Prostate gland (tissue), 2 donors: ENCODE measurements at regions of chr11 and their contacts with region 1.

Region 1: DNA sequence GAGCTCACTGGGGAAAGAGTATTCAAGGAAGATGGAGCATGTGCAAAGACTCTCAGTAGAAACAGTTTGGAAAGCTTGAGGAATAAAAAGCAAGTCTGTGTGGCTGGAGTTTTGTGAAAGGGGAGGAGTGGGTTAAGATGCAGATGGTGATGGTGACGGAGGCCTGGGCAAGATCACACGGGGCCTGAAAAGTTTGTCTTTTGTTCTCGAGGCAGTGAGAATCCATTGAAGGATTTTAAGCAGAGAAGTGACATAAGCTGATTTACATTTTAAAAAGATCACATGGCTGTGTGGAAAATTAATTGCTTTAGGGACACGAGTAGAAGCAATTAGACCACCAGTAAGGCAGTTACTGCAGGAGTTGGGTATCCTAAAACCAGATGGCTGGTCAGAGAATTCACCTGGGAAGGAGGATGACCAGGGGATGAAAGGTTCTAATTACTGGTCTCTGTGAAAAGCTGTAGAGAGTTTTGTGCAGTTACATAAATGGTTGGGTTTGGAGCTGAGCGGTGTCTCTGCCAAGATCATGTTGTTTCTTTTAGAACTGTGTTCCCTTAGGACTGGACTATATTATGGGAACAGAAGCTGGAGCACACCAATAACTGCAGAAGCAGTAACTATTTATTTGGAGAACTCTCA is 7.1 kb downstream of the RRP8 start:
- DNase-seq: no peak
- H3K4me3 ChIP-seq: no peak overlapping the region
- H3K27ac ChIP-seq: peak overlapping the region; percentile 3 to 39
- H3K4me1 ChIP-seq: no peaks in the 10 kb centered on the region
- H3K27me3 ChIP-seq: no peaks in the 10 kb centered on the region
- CTCF ChIP-seq: no peak
- POLR2A ChIP-seq: no peak

Region 2: DNA sequence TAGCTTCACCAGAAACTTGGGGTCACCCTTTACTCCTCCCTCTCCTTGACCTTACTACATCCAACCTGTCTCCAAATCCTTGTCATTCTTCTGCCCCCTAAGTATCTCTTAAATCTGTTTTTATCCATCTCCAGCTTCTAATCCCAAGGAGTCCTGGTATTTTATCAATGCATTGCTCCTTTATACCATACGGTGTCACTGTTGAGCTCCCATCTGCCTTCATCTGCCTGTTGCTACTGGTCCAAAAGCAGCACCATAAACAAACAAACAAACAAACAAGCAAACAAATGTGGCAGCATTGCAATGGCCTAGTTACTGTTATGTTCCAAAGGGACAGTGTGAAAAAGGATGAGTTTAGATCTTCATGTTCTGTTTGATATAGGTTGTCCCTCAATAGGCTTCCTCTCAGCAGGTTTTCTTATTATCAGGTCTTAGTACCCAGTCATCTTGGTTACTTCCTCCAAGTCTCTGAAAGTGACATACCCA is 65.0 kb before region 1 on chr11:
- intact Hi-C with region 1: loop called (anchors 5 kb)
- DNase-seq: no peak
- H3K4me3 ChIP-seq: no peak overlapping the region
- H3K27ac ChIP-seq: no peak overlapping the region
- H3K4me1 ChIP-seq: no peaks in the 10 kb centered on the region
- H3K27me3 ChIP-seq: no peaks in the 10 kb centered on the region
- CTCF ChIP-seq: peak; percentile 29 to 80 (median 70)
- POLR2A ChIP-seq: no peak

Region 3: GRCh38 chr11:7381937-7382336 is 785.6 kb after region 1 on chr11:
- intact Hi-C with region 1: no loop called
- DNase-seq: no peak
- H3K4me3 ChIP-seq: no peak overlapping the region
- H3K27ac ChIP-seq: no peak overlapping the region
- H3K4me1 ChIP-seq: no peaks in the 10 kb centered on the region
- H3K27me3 ChIP-seq: no peaks in the 10 kb centered on the region
- CTCF ChIP-seq: no peak
- POLR2A ChIP-seq: no peak